Activated CD4-positive, alpha-beta memory T cell treated with anti-CD3 and anti-CD28 coated beads for 36 hours (primary cell): ENCODE measurements at regions of chr3 and their contacts with region 1.

Region 1: GRCh38 chr3:186534113-186534669 is 10.0 kb downstream of the CRYGS start:
- DNase-seq: peak; percentile 70
- H3K4me3 Mint-ChIP-seq: peak overlapping the region; percentile 46
- H3K27ac Mint-ChIP-seq: peak overlapping the region; percentile 95
- H3K4me1 Mint-ChIP-seq: peaks cover 89% of the 10 kb centered on the region
- H3K27me3 Mint-ChIP-seq: no peaks in the 10 kb centered on the region

Region 2: DNA sequence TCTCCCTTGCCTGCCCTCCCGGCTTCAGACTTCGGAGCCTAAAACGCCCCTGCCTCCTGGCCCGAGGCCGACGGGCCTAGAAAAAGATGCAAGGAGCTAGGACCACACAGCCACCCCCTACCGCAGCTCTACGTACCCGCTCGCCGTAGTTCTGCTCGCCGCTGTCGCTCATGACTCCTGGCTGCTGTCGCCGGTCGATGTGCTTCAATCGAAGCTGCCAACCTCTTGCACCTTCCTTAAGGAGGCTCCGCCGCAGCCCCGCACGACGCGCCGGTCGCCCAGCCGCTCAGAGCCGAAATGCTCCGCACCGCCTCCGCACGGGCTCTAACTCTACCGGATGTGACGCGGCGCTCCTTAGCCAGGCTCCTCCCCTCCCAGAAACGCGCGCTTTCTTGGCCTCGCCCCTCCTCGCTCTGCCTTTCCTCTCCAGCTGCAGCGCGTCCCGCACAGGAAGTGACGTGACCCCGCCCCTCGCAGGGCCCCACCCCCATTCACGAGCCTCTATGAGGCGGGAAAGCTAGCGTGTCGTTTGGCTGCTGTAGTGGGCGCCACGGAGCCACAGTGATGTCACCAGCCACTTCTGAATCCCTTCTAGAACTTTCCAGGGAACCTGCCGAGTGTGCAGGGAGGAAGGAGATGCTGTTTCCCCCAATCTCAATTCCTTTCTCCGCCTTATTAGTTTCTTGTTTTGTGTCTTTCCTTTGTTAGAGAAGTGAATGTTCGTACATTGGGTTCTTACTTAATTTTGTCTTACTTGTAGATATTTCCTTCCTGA is 596.3 kb before region 1 on chr3 and contains the start of gene TRA2B:
- CTCF ChIA-PET with region 1: interaction called, 59 read pairs
- POLR2A ChIA-PET with region 1: interaction called, 13 read pairs
- intact Hi-C with region 1: no loop called
- DNase-seq: peak; percentile 99
- H3K4me3 Mint-ChIP-seq: peak within 1 kb of the TSS; percentile 99
- H3K27ac Mint-ChIP-seq: peak within 1 kb of the TSS; percentile 99
- H3K4me1 Mint-ChIP-seq: peaks cover 21% of the 10 kb centered on the region
- H3K27me3 Mint-ChIP-seq: peaks cover 3% of the 10 kb centered on the region
- total RNA-seq, gene TRA2B: 184 to 187 TPM

Region 3: GRCh38 chr3:185983495-185984141 is 550.6 kb before region 1 on chr3:
- CTCF ChIA-PET with region 1: interaction called, 82 read pairs
- POLR2A ChIA-PET with region 1: no interaction called
- intact Hi-C with region 1: no loop called
- DNase-seq: peak; percentile 64
- H3K4me3 Mint-ChIP-seq: no peak overlapping the region
- H3K27ac Mint-ChIP-seq: no peak overlapping the region
- H3K4me1 Mint-ChIP-seq: peaks cover 4% of the 10 kb centered on the region
- H3K27me3 Mint-ChIP-seq: peaks cover 11% of the 10 kb centered on the region

Region 4: GRCh38 chr3:186413615-186414415 is 120.4 kb before region 1 on chr3:
- CTCF ChIA-PET with region 1: interaction called, 5 read pairs
- POLR2A ChIA-PET with region 1: interaction called, 3 read pairs
- intact Hi-C with region 1: loop called (anchors 1 kb)
- DNase-seq: peak; percentile 61
- H3K4me3 Mint-ChIP-seq: peak overlapping the region; percentile 55
- H3K27ac Mint-ChIP-seq: no peak overlapping the region
- H3K4me1 Mint-ChIP-seq: peaks cover 45% of the 10 kb centered on the region
- H3K27me3 Mint-ChIP-seq: no peaks in the 10 kb centered on the region

Region 5: DNA sequence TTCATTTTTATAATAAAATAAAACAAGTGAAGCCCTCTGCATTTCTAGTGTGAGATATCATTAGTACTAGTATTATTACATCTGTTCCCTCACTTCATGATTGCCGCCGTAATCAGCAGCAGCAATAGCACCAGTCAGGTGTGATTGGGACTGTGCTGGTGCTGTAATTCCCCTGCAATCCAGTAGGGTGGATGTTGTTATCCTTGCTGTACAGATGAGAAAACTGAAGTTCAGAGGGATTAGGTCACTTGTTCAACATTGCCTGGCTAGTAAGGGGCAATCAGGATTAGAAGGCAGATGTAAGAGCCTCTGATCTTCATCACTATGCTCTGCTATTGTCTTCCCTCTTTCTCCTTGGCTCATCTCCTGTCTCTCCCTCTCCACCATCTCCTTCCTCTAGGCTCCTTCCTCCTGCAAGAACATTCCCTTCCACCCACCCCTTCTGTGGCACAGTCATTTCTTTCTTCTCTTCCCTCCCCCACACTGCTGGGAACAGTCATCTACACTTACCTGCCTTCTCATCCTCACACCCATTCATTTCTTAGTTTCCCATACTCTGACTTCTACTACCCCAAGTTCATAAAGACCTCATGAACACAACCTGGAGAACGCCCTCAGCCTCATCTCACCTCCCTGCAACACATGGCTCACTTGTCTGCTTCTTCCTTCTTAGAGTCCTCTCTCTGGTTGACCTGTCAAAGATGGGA is 19.7 kb before region 1 on chr3:
- CTCF ChIA-PET with region 1: interaction called, 50 read pairs
- POLR2A ChIA-PET with region 1: interaction called, 39 read pairs
- intact Hi-C with region 1: loop called (anchors 1 kb)
- DNase-seq: peak; percentile 72
- H3K4me3 Mint-ChIP-seq: no peak overlapping the region
- H3K27ac Mint-ChIP-seq: peak overlapping the region; percentile 81
- H3K4me1 Mint-ChIP-seq: peaks cover 96% of the 10 kb centered on the region
- H3K27me3 Mint-ChIP-seq: no peaks in the 10 kb centered on the region

Region 6: DNA sequence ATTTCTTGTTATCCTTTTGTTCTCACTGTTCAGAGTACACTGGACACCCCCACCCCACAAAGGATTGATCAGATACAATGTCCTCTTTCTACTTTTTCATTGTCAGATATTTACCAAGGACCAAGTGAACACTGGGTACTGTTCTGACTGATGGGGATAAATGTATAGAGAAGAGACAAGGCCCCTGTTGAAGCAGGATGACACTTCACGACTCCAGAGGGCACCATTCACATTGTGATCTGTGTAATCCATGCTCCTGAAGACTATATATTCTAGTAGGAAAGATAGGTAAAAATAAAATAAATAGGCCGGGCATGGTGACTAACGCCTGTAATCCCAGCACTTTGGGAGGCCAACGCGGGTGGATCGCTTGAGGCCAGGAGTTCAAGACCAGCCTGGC is 17.2 kb after region 1 on chr3:
- CTCF ChIA-PET with region 1: no interaction called
- POLR2A ChIA-PET with region 1: no interaction called
- intact Hi-C with region 1: no loop called
- DNase-seq: no peak
- H3K4me3 Mint-ChIP-seq: no peak overlapping the region
- H3K27ac Mint-ChIP-seq: no peak overlapping the region
- H3K4me1 Mint-ChIP-seq: no peaks in the 10 kb centered on the region
- H3K27me3 Mint-ChIP-seq: no peaks in the 10 kb centered on the region

Region 7: GRCh38 chr3:186570096-186570940 is 36.1 kb after region 1 on chr3 and contains the start of gene DNAJB11:
- CTCF ChIA-PET with region 1: interaction called, 4 read pairs
- POLR2A ChIA-PET with region 1: interaction called, 13 read pairs
- intact Hi-C with region 1: no loop called
- DNase-seq: peak; percentile 100
- H3K4me3 Mint-ChIP-seq: peak within 1 kb of the TSS; percentile 95
- H3K27ac Mint-ChIP-seq: peak within 1 kb of the TSS; percentile 91
- H3K4me1 Mint-ChIP-seq: peaks cover 49% of the 10 kb centered on the region
- H3K27me3 Mint-ChIP-seq: no peaks in the 10 kb centered on the region
- total RNA-seq, gene DNAJB11: 36.9 to 39.5 TPM